ENCODE measurements at regions of chr1 and their contacts with region 1.

Region 1: GRCh38 chr1:201481761-201482493 is 12.9 kb upstream of the PHLDA3 start:
- DNase-seq: peak; percentile 86
- H3K4me3 ChIP-seq: peak overlapping the region; percentile 54
- H3K27ac ChIP-seq: peak overlapping the region; percentile 73
- H3K4me1 ChIP-seq: peaks cover 44% of the 10 kb centered on the region
- H3K27me3 ChIP-seq: no peaks in the 10 kb centered on the region
- CTCF ChIP-seq: peak; percentile 93

Region 2: DNA sequence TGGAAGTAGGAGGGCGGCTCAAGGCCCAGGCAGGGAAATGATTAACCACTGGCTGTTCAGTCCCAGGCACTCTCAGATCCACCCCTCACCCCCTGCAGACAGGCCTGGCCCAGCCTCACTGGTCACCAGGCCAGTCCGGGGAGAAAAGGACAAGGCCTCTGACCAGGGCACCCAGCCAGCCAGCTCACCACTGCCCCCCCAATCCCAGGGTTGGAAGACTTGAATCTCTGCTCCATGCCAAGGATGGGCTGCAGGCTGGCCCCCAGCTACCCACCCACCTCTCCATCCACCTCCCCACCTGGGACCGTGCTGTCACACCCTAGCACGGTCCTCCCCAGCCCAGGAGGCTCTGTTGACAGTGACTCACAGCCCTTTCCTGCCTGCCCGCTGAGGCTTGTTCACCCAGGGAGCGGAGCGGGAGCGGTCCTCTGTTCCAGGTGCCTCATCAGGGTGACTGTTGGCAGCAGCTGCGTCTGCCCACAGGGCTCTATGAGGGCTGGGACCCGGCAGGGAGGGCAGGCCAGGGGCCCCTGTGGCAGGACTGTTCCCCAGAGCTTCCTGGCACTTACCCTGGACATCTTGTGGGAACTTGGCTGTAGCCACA is 85.0 kb before region 1 on chr1:
- intact Hi-C with region 1: no loop called
- DNase-seq: no peak
- H3K4me3 ChIP-seq: no peak overlapping the region
- H3K27ac ChIP-seq: no peak overlapping the region
- H3K4me1 ChIP-seq: peaks cover 26% of the 10 kb centered on the region
- H3K27me3 ChIP-seq: peaks cover 33% of the 10 kb centered on the region
- CTCF ChIP-seq: no peak

Region 3: GRCh38 chr1:201426479-201427310 is 55.2 kb before region 1 on chr1:
- intact Hi-C with region 1: no loop called
- DNase-seq: peak; percentile 36
- H3K4me3 ChIP-seq: no peak overlapping the region
- H3K27ac ChIP-seq: peak overlapping the region; percentile 39
- H3K4me1 ChIP-seq: peaks cover 9% of the 10 kb centered on the region
- H3K27me3 ChIP-seq: no peaks in the 10 kb centered on the region
- CTCF ChIP-seq: no peak

Region 4: GRCh38 chr1:201511941-201512539 is 30.1 kb after region 1 on chr1:
- intact Hi-C with region 1: loop called (anchors 2 kb)
- DNase-seq: peak; percentile 71
- H3K4me3 ChIP-seq: peak overlapping the region; percentile 24
- H3K27ac ChIP-seq: peak overlapping the region; percentile 89
- H3K4me1 ChIP-seq: peaks cover 36% of the 10 kb centered on the region
- H3K27me3 ChIP-seq: no peaks in the 10 kb centered on the region
- CTCF ChIP-seq: no peak

Measured in left ventricle myocardium inferior (tissue), 1 donor.